ENCODE measurements at regions of chr5 and their contacts with region 1.

Region 1: GRCh38 chr5:113123618-113124017 is 147.0 kb downstream of the DCP2 start:
- DNase-seq: peak; percentile 31
- H3K4me3 Mint-ChIP-seq: no peak overlapping the region
- H3K27ac Mint-ChIP-seq: no peak overlapping the region
- H3K4me1 Mint-ChIP-seq: no peaks in the 10 kb centered on the region
- H3K27me3 Mint-ChIP-seq: no peaks in the 10 kb centered on the region
- CTCF ChIP-seq: no peak

Region 2: GRCh38 chr5:113166852-113167366 is 43.3 kb after region 1 on chr5:
- CTCF ChIA-PET with region 1: interaction called, 5 read pairs
- POLR2A ChIA-PET with region 1: interaction called, 8 read pairs
- intact Hi-C with region 1: loop called (anchors 2 kb)
- DNase-seq: peak; percentile 94
- H3K4me3 Mint-ChIP-seq: peak overlapping the region; percentile 60
- H3K27ac Mint-ChIP-seq: peak overlapping the region; percentile 87
- H3K4me1 Mint-ChIP-seq: peaks cover 66% of the 10 kb centered on the region
- H3K27me3 Mint-ChIP-seq: no peaks in the 10 kb centered on the region
- CTCF ChIP-seq: no peak

Region 3: GRCh38 chr5:113357696-113358476 is 234.3 kb after region 1 on chr5:
- CTCF ChIA-PET with region 1: no interaction called
- POLR2A ChIA-PET with region 1: no interaction called
- intact Hi-C with region 1: no loop called
- DNase-seq: no peak
- H3K4me3 Mint-ChIP-seq: no peak overlapping the region
- H3K27ac Mint-ChIP-seq: no peak overlapping the region
- H3K4me1 Mint-ChIP-seq: no peaks in the 10 kb centered on the region
- H3K27me3 Mint-ChIP-seq: no peaks in the 10 kb centered on the region
- CTCF ChIP-seq: no peak

Measured in MCF 10A (cell line).